HepG2 (cell line): ENCODE measurements at regions of chr22 and their contacts with region 1.

Region 1: DNA sequence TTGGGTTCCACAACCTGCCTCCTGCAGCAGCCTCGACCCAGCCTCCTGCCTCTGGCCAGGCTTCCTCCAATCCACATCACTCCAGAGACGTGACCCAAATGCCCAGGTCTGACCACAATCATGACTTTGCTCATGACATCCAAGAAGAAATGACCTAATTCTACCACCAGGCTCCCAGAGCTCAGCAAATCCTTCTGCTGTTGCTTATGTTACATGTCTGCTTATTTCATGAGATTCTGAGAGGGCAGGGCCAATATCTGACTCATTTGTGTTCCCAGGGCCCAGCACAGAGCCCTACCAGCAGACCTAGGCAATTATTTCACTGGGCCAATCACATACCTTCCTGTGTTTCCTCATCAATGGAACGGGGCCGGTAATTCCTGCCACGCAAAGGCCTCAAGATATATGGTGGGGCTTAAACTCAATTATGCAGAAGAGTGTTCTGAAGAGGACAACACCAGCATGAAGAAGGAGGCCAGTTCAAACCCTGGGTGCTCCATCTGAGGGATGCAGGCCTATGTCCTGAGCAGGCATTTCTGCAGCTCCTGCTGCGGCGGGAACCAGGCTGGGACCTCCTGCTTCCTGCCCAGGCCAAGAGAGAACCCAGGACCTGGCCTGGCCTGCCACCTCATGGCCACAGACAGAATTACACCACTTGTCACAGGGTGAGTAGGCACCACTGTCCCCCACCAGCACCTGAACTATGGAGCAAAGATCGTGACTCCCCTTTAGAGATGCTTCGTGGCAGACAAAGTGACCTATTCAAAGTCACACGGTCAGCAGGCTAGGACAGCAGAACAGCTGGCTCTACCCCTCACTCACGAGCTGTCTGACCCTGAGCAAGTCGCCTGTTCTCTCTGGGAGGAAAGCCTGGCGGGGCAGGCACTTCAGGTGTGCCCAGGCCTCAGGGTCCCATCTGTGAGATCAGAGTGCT is 5.9 kb downstream of the CENPM start:
- DNase-seq: peak; percentile 66
- ATAC-seq: peak; percentile 92
- H3K4me3 ChIP-seq: no peak overlapping the region
- H3K27ac ChIP-seq: no peak overlapping the region
- H3K4me1 ChIP-seq: peaks cover 33% of the 10 kb centered on the region
- H3K27me3 ChIP-seq: no peaks in the 10 kb centered on the region
- CTCF ChIP-seq: peak; percentile 98
- EP300 ChIP-seq: no peak
- POLR2A ChIP-seq: peak in 1 of 2 experiments; percentile 18; a peak in 1 of 4 replicates
- RAD21 ChIP-seq: peak; percentile 94

Region 2: GRCh38 chr22:41697126-41697775 is 243.8 kb before region 1 on chr22:
- CTCF ChIA-PET with region 1: interaction called, 22 read pairs
- POLR2A ChIA-PET with region 1: interaction called, 3 read pairs
- in situ Hi-C with region 1: loop called (anchors 5 kb)
- intact Hi-C with region 1: loop called (anchors 1 kb)
- DNase-seq: peak; percentile 81
- ATAC-seq: peak; percentile 91
- H3K4me3 ChIP-seq: peak overlapping the region; percentile 45 to 66 (median 53); a peak in 4 of 6 replicates
- H3K27ac ChIP-seq: no peak overlapping the region
- H3K4me1 ChIP-seq: peaks cover 16% of the 10 kb centered on the region
- H3K27me3 ChIP-seq: no peaks in the 10 kb centered on the region
- CTCF ChIP-seq: peak; percentile 96
- EP300 ChIP-seq: no peak
- POLR2A ChIP-seq: 0 out of 4 replicates have a peak, but pooled peaks of 1 of the 2 experiments have one; percentile 21
- RAD21 ChIP-seq: peak; percentile 93

Region 3: DNA sequence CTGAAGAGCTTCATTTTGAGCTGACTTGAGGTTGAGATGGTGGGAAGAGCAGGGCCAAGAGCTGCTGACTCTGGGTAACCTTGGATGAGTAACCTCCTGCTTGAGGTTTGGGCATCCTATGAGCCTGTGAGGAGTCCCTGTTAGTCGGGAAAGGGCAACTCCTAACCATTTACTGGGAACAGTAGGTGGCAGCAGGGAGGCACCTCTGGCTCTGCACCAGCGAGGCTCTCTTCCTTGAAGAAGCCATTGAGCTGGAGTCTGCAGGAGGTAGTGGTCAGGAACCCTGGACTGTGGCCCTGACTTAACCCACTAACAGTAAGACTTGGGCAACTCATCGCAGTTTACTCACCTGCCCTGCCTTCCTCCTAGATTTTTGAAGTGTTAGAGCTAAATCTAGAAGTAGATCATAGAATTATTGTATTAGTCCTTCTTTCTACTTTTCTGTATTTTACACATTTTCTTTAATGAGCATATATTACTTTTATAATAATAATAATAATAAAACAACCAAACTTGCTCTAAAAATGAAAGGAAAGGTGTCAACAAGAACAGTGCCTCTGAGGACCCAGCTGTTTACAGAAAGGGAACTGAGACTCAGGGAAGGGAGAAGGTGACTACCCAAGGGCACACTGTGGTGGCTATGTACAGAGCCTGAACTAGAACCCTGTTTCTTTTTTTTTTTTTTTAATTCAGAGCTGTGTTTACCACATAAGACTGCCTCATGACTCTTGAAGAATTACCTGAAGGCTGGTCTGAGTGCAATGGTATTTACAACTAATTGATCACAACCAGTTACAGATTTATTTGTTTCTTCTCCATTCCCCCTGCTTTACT is 194.3 kb before region 1 on chr22:
- CTCF ChIA-PET with region 1: interaction called, 16 read pairs
- POLR2A ChIA-PET with region 1: interaction called, 3 read pairs
- in situ Hi-C with region 1: no loop called
- intact Hi-C with region 1: loop called (anchors 1 kb)
- DNase-seq: peak; percentile 36
- ATAC-seq: peak; percentile 89
- H3K4me3 ChIP-seq: no peak overlapping the region
- H3K27ac ChIP-seq: no peak overlapping the region
- H3K4me1 ChIP-seq: peaks cover 12% of the 10 kb centered on the region
- H3K27me3 ChIP-seq: peaks cover 0 to 15% of the 10 kb centered on the region in 2 experiments; a peak in 1 of 5 replicates
- CTCF ChIP-seq: peak; percentile 87
- EP300 ChIP-seq: no peak
- POLR2A ChIP-seq: no peak
- RAD21 ChIP-seq: peak; percentile 60

Region 4: DNA sequence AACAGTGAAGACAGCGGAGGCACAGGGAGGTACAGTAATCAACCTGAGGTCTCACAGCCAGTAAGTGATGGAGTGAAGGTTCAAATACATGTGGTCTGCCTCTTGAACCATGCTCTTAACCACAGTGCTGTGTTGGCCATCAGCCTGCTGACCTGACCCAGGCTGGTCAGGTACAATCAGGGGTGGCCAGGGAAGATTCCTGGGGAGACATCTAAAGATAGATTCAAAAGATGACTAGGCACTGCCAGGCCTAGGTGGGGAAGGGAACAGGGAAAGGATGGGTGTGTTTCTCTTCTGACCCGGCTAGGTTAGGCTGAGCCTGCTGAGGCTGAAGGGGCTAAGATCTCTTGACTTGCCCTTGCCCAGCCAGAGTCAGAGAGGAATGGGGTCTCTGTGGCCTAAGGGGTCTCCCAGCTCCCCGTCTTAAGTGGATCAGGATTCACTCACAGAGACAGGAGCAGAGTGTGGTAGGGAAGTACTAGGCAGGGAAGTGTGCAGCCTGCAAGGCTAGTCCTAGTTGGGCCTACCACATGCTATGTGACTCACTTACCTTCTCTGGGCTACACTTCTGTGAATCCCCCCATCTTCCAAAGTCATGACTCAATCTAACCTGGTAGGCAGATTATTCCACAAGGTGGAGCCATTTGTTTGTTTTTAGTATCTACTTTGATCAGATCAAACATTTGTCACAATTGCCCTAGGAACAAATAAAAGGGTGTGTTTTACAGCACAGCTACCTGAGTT is 118.6 kb before region 1 on chr22:
- CTCF ChIA-PET with region 1: interaction called, 15 read pairs
- POLR2A ChIA-PET with region 1: no interaction called
- in situ Hi-C with region 1: no loop called
- intact Hi-C with region 1: no loop called
- DNase-seq: peak; percentile 62
- ATAC-seq: peak; percentile 54
- H3K4me3 ChIP-seq: no peak overlapping the region
- H3K27ac ChIP-seq: no peak overlapping the region
- H3K4me1 ChIP-seq: no peaks in the 10 kb centered on the region
- H3K27me3 ChIP-seq: no peaks in the 10 kb centered on the region
- CTCF ChIP-seq: peak; percentile 64
- EP300 ChIP-seq: no peak
- POLR2A ChIP-seq: no peak
- RAD21 ChIP-seq: peak; percentile 63